B cell (primary cell): ENCODE measurements at regions of chr11 and their contacts with region 1.

Region 1: DNA sequence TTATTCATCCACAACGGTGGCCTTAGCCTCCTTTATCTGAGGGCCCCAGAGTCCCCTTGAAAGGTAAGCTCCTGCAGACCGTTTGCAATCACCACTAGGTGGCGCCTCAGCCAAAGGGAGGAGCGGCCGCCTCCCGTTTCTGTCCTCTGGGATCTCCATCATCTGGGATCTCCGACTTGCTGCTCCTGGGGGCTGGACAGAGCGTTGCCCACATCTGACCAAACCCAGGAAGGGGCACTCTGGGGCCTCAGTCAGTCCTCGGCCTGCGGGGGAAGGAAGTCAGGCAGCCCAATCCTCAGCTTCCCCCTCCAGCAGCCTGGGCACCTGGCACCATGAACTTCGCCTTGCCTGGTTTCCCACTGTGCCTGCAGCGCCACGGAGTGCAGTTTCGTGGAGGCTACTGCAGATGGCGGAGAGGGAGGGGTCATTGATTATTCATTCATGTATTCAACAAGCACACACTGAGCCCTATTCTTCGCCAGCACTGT is 23.5 kb downstream of the TP53I11 start:
- DNase-seq: peak; percentile 75
- ATAC-seq: peak; percentile 62
- H3K4me3 ChIP-seq: no peak overlapping the region
- H3K4me3 Mint-ChIP-seq: no peak overlapping the region
- H3K27ac ChIP-seq: no peak overlapping the region
- H3K27ac Mint-ChIP-seq: no peak overlapping the region
- H3K4me1 ChIP-seq: peaks cover 0 to 6% of the 10 kb centered on the region in 2 donors
- H3K4me1 Mint-ChIP-seq: no peaks in the 10 kb centered on the region
- H3K27me3 ChIP-seq: no peaks in the 10 kb centered on the region
- H3K27me3 Mint-ChIP-seq: no peaks in the 10 kb centered on the region
- CTCF ChIP-seq: peak; percentile 93

Region 2: GRCh38 chr11:44911029-44911814 is 16.0 kb before region 1 on chr11:
- CTCF ChIA-PET with region 1: interaction called, 16 read pairs
- POLR2A ChIA-PET with region 1: no interaction called
- intact Hi-C with region 1: no loop called
- DNase-seq: peak; percentile 85
- ATAC-seq: peak; percentile 69
- H3K4me3 ChIP-seq: no peak overlapping the region
- H3K4me3 Mint-ChIP-seq: no peak overlapping the region
- H3K27ac ChIP-seq: no peak overlapping the region
- H3K27ac Mint-ChIP-seq: no peak overlapping the region
- H3K4me1 ChIP-seq: peaks cover 23 to 31% of the 10 kb centered on the region in 2 donors
- H3K4me1 Mint-ChIP-seq: peaks cover 24% of the 10 kb centered on the region
- H3K27me3 ChIP-seq: peaks cover 0 to 5% (median 0%) of the 10 kb centered on the region in 4 experiments
- H3K27me3 Mint-ChIP-seq: peaks cover 4% of the 10 kb centered on the region
- CTCF ChIP-seq: peak; percentile 82

Region 3: DNA sequence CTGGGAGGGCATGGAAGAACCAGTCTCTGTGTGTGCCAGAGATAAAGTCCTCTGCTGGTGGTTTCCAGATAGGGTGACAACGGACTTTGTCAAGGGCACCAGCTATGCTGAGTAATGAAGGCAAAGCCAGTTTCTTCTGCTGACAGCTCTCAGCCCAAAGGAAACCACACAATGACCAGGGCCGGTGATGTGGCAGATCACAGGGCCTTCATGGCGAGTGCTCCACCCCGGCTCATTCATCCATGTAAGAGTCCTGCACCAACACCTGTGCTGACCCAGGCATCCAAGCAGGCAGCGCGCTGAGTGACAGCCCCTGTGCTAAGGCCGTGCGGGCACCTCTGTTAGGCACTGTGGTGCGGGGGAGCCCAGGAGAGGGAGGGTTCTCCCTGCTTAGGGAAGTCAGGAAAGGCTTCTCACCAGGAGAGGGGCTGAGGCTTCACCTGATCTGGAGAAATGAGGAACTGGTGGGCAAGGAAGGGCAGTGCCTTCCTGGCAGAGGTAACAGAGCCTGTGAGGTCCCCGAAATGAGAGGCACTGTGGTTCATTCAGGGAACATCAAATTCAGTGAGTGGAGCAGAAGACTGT is 10.3 kb before region 1 on chr11:
- CTCF ChIA-PET with region 1: interaction called, 16 read pairs
- POLR2A ChIA-PET with region 1: no interaction called
- intact Hi-C with region 1: no loop called
- DNase-seq: no peak
- ATAC-seq: no peak
- H3K4me3 ChIP-seq: no peak overlapping the region
- H3K4me3 Mint-ChIP-seq: no peak overlapping the region
- H3K27ac ChIP-seq: no peak overlapping the region
- H3K27ac Mint-ChIP-seq: peak overlapping the region; percentile 50
- H3K4me1 ChIP-seq: peaks cover 30 to 34% of the 10 kb centered on the region in 2 donors
- H3K4me1 Mint-ChIP-seq: peaks cover 23% of the 10 kb centered on the region
- H3K27me3 ChIP-seq: no peaks in the 10 kb centered on the region
- H3K27me3 Mint-ChIP-seq: peaks cover 4% of the 10 kb centered on the region
- CTCF ChIP-seq: no peak

Region 4: GRCh38 chr11:44950625-44951476 is 23.6 kb after region 1 on chr11 and contains the start of gene TP53I11:
- CTCF ChIA-PET with region 1: interaction called, 12 read pairs
- POLR2A ChIA-PET with region 1: no interaction called
- intact Hi-C with region 1: no loop called
- DNase-seq: peak; percentile 84
- ATAC-seq: peak; percentile 76
- H3K4me3 ChIP-seq: peak within 1 kb of the TSS; percentile 51 to 97 (median 83)
- H3K4me3 Mint-ChIP-seq: peak within 1 kb of the TSS; percentile 89
- H3K27ac ChIP-seq: peak within 1 kb of the TSS; percentile 64 to 85
- H3K27ac Mint-ChIP-seq: peak within 1 kb of the TSS; percentile 78
- H3K4me1 ChIP-seq: peaks cover 13 to 31% of the 10 kb centered on the region in 2 donors
- H3K4me1 Mint-ChIP-seq: peaks cover 61% of the 10 kb centered on the region
- H3K27me3 ChIP-seq: no peaks in the 10 kb centered on the region
- H3K27me3 Mint-ChIP-seq: no peaks in the 10 kb centered on the region
- CTCF ChIP-seq: peak; percentile 80
- total RNA-seq, gene TP53I11: 229 and 240 TPM in 2 replicates

Region 5: DNA sequence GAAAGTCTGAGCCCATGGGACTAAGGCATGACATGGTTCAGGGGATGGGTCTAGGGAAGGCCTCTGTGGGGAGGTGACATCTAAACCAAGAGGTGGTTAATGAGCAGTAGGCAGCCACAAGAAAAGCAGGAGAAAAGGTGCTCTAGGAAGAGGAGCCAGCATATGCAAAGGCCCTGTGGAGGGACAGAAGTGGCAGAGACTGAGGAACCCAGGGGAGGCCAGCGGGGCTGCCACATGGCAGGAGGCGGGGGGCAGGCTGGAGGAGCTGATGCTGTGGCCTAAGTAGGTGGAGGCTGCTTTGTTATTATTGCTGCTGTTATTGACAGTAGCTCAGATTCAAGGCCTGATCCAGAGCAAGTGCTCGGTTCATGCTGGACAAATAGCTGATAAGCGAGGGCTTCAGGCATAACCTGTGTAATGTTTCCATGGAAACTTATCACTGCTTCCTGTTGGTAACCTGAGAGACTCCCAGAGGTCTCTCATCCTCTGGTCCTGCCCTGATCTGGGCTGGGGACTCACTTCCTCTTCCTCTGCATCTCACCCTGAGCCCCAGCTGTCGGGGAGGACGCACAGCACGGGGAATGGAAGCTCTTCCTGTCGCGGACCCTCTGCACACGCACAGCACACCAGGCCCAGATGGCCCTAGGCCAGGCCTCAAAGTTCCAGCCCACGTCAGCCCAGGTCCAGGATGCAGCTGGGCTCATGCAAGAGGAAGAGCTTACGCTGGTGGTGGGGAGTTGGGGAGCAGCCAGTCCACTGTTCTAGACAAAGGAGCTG is 98.7 kb after region 1 on chr11:
- CTCF ChIA-PET with region 1: interaction called, 32 read pairs
- POLR2A ChIA-PET with region 1: interaction called, 4 read pairs
- intact Hi-C with region 1: no loop called
- DNase-seq: peak; percentile 82
- ATAC-seq: peak; percentile 50
- H3K4me3 ChIP-seq: no peak overlapping the region
- H3K4me3 Mint-ChIP-seq: peak overlapping the region; percentile 51
- H3K27ac ChIP-seq: peak overlapping the region; percentile 72 to 79
- H3K27ac Mint-ChIP-seq: peak overlapping the region; percentile 96
- H3K4me1 ChIP-seq: peaks cover 46 to 58% of the 10 kb centered on the region in 2 donors
- H3K4me1 Mint-ChIP-seq: peaks cover 66% of the 10 kb centered on the region
- H3K27me3 ChIP-seq: peaks cover 0 to 2% (median 0%) of the 10 kb centered on the region in 4 experiments
- H3K27me3 Mint-ChIP-seq: no peaks in the 10 kb centered on the region
- CTCF ChIP-seq: no peak

Region 6: GRCh38 chr11:45079943-45080719 is 152.9 kb after region 1 on chr11:
- CTCF ChIA-PET with region 1: interaction called, 10 read pairs
- POLR2A ChIA-PET with region 1: no interaction called
- intact Hi-C with region 1: no loop called
- DNase-seq: peak; percentile 78
- ATAC-seq: peak; percentile 59
- H3K4me3 ChIP-seq: peak overlapping the region in 2 of 5 experiments; percentile 5 to 6
- H3K4me3 Mint-ChIP-seq: peak overlapping the region; percentile 71
- H3K27ac ChIP-seq: peak overlapping the region; percentile 65 to 73
- H3K27ac Mint-ChIP-seq: peak overlapping the region; percentile 93
- H3K4me1 ChIP-seq: peaks cover 52 to 65% of the 10 kb centered on the region in 2 donors
- H3K4me1 Mint-ChIP-seq: peaks cover 74% of the 10 kb centered on the region
- H3K27me3 ChIP-seq: no peaks in the 10 kb centered on the region
- H3K27me3 Mint-ChIP-seq: no peaks in the 10 kb centered on the region
- CTCF ChIP-seq: no peak

Region 7: DNA sequence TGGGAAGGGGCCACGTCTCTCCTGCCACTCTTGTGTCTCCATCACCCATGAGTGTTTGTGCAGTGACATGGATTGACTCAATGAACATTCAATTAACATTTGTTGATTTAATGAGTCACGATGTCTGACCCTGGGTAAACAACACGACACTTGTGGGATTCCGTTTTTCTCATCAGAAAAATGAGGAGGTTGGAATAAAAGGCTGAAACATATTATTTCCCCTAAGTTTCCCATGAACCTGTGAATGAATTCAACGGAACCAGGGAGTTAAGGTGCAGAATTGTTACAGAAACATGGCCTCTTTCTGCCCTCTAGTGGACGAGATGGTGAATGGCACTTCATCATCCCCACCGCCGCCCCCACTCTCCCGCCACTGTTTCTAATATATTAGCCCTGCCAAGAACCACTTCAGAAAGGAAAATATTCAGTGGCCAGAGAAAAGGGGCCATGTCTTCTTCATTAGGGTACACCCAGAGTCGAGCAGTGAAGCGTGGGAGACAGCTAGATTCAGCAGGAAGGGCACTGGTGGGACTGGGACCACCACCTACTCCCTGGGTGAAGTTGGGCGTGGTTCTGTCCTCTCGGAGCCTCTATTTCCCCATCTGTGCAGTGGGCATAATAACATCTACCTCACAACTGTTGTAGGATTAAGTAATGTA is 405.2 kb after region 1 on chr11:
- CTCF ChIA-PET with region 1: interaction called, 19 read pairs
- POLR2A ChIA-PET with region 1: no interaction called
- intact Hi-C with region 1: no loop called
- DNase-seq: peak; percentile 62
- ATAC-seq: peak; percentile 53
- H3K4me3 ChIP-seq: no peak overlapping the region
- H3K4me3 Mint-ChIP-seq: no peak overlapping the region
- H3K27ac ChIP-seq: no peak overlapping the region
- H3K27ac Mint-ChIP-seq: no peak overlapping the region
- H3K4me1 ChIP-seq: no peaks in the 10 kb centered on the region
- H3K4me1 Mint-ChIP-seq: peaks cover 6% of the 10 kb centered on the region
- H3K27me3 ChIP-seq: peaks cover 0 to 15% (median 0%) of the 10 kb centered on the region in 4 experiments
- H3K27me3 Mint-ChIP-seq: peaks cover 29% of the 10 kb centered on the region
- CTCF ChIP-seq: peak; percentile 95